ENCODE measurements at regions of chr6 and their contacts with region 1.

Region 1: DNA sequence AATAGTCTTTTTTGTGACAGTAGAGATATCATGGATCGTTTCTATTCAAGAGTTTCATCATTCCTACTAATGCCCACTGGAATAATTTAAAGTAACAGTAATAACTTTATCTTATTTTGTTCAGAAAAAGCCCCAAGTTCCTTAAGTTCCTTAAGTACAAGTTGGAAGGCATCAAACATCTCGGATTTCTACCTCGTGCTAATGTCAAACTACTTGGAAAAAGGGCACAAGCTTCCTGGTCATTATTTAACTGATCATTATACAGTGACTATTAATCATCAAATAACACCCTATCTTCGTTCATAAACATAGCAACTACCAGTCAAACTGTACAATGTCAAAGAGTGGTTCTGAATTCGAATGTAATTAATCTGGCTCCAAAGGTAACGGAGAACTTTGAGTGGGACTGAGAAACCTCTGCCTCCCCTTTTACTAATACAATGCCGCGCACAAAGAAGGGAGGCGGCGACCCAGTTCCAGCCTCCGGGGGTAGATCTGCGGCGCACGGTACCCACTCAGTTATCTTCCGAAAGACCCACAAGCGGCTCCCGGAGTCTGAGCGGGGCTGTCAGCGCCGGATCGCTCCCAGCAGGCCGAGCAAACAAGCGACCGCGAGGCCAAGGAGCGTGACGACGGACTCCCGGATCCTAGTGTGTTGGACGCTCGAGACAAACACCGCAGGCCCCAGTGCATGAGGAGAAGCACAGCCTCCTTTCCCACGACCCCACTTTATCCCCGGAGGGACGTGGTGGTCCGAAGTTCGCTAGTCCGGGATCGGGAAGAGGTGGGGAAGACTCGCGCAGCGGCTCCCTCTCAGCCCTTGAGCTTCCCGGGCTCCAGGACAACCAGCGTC is 716 bp downstream of the SHPRH start:
- DNase-seq: peak in 1 of 2 donors; percentile 58
- ATAC-seq: peak; percentile 39 to 72 (median 60)
- H3K4me3 ChIP-seq: peak overlapping the region; percentile 48 to 96 (median 84)
- H3K27ac ChIP-seq: peak overlapping the region; percentile 62 to 93 (median 92)
- H3K4me1 ChIP-seq: peaks cover 0 to 45% (median 37%) of the 10 kb centered on the region in 9 donors
- H3K27me3 ChIP-seq: no peaks in the 10 kb centered on the region
- CTCF ChIP-seq: no peak

Region 2: DNA sequence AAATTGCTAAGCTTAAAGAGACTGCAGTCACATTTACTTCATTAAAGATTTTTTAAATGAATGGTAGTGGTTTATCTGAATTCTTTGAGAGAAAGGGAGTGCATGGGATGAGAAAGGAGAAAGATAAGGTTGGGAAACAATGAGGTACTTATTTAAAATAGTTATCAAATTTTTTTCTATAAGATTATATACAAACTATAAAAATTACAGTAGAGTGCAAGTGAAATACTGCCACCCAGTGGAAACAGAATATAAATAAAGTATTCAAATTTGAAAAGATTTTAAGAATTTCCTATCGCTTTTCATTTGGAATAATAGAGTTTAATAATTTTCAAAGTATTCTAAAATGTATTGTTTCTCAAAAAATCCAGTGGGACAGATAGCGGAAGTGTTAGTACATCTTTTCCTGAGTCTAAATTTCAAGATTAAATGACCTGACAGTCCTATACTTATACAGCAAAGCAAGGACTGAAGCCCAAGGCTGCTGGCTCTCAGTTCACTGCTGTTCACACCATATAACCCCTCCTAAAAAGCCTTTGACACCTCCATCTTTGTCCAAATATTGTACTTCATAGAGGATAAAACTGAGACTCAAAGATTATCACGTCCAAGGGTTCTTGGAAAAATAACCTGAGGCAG is 259.2 kb before region 1 on chr6:
- intact Hi-C with region 1: no loop called
- DNase-seq: no peak
- ATAC-seq: no peak
- H3K4me3 ChIP-seq: no peak overlapping the region
- H3K27ac ChIP-seq: no peak overlapping the region
- H3K4me1 ChIP-seq: peaks cover 0 to 25% (median 4%) of the 10 kb centered on the region in 9 donors
- H3K27me3 ChIP-seq: no peaks in the 10 kb centered on the region
- CTCF ChIP-seq: peak; percentile 10 to 72 (median 59)

Region 3: GRCh38 chr6:145814501-145815308 is 148.7 kb before region 1 on chr6 and contains the start of gene FBXO30:
- intact Hi-C with region 1: loop called in 2 of 10 experiments (anchors 10 kb)
- DNase-seq: peak; percentile 89 to 92
- ATAC-seq: peak; percentile 97 to 99 (median 98)
- H3K4me3 ChIP-seq: peak within 1 kb of the TSS; percentile 63 to 87 (median 79)
- H3K27ac ChIP-seq: peak within 1 kb of the TSS; percentile 92 to 98 (median 95)
- H3K4me1 ChIP-seq: peaks cover 0 to 79% (median 57%) of the 10 kb centered on the region in 9 donors
- H3K27me3 ChIP-seq: no peaks in the 10 kb centered on the region
- CTCF ChIP-seq: peak in 4 of 9 donors; percentile 15 to 38 (median 26)
- total RNA-seq, gene FBXO30: 10.6 to 18.4 (median 14.2) TPM

Region 4: DNA sequence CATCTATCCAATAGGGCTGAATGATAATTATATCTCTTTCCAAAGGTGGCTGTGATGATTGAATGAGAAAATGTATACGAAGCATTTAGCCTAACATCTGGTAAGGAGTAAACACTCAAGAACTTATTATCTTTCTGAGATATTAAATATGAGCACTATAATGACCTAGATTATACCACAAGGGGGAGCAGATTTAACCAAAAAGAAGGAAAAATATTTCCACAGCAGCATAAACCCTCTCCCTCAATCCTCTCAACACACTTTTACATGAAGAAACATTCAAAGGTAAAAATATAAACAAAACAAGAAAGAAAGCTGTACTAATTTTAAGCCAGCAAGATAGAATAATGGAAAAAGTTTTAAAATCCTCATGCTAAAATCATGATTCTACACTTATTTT is 67.6 kb before region 1 on chr6:
- intact Hi-C with region 1: no loop called
- DNase-seq: no peak
- ATAC-seq: no peak
- H3K4me3 ChIP-seq: no peak overlapping the region
- H3K27ac ChIP-seq: no peak overlapping the region
- H3K4me1 ChIP-seq: peaks cover 0 to 9% (median 0%) of the 10 kb centered on the region in 9 donors
- H3K27me3 ChIP-seq: no peaks in the 10 kb centered on the region
- CTCF ChIP-seq: peak in 2 of 9 donors; percentile 17 to 29

Region 5: GRCh38 chr6:146543211-146543939 is 579.9 kb after region 1 on chr6 and contains the start of gene RAB32:
- intact Hi-C with region 1: loop called in 3 of 10 experiments (anchors 5 to 10 kb)
- DNase-seq: peak; percentile 93 to 94
- ATAC-seq: peak; percentile 98 to 100 (median 99)
- H3K4me3 ChIP-seq: peak within 1 kb of the TSS; percentile 77 to 86 (median 80)
- H3K27ac ChIP-seq: peak within 1 kb of the TSS; percentile 84 to 98 (median 96)
- H3K4me1 ChIP-seq: peaks cover 0 to 43% (median 30%) of the 10 kb centered on the region in 9 donors
- H3K27me3 ChIP-seq: no peaks in the 10 kb centered on the region
- CTCF ChIP-seq: peak; percentile 50 to 93 (median 82)
- total RNA-seq, gene RAB32: 1.6 to 14.5 (median 4.2) TPM

Measured in heart right ventricle (tissue), 16 donors.